ENCODE measurements at regions of chr17 and their contacts with region 1.

Region 1: DNA sequence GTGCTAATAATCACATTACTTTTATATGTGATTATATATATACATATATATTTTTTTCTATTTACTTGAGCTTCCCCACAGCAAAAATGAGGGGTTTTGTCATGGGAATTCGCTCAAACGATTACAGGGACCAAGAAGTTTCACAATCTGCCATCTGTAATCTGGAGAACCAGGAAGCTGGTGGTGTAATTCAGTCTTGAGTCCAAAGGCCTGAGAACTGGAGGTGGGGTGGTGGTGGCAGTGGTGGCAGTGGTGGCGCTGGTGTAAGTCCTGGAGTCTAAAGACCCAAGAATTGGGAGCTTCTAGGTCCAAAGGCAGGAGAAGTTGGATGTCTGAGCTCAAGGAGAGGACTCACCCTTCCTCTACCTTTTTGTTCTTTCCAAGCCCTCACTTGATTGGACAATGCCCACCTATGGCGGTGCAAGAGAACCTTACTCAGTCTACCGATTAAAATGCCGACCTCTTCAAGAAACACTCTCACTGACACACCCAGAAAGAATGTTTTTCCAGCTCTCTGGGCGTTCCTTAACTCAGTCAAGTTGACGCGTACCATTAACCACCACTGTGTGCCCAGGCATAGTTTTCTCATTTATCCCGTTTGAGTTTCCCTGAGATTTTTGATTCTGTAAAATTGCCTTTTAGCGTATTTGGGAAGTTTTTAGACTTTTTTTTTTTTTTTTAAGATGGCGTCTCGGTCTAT is 31.9 kb downstream of the POLR2A start:
- DNase-seq: no peak
- H3K4me3 ChIP-seq: no peak overlapping the region
- H3K27ac ChIP-seq: no peak overlapping the region
- H3K4me1 ChIP-seq: no peaks in the 10 kb centered on the region
- H3K27me3 ChIP-seq: no peaks in the 10 kb centered on the region
- CTCF ChIP-seq: no peak
- EP300 ChIP-seq: no peak
- POLR2A ChIP-seq: no peak
- RAD21 ChIP-seq: no peak

Region 2: DNA sequence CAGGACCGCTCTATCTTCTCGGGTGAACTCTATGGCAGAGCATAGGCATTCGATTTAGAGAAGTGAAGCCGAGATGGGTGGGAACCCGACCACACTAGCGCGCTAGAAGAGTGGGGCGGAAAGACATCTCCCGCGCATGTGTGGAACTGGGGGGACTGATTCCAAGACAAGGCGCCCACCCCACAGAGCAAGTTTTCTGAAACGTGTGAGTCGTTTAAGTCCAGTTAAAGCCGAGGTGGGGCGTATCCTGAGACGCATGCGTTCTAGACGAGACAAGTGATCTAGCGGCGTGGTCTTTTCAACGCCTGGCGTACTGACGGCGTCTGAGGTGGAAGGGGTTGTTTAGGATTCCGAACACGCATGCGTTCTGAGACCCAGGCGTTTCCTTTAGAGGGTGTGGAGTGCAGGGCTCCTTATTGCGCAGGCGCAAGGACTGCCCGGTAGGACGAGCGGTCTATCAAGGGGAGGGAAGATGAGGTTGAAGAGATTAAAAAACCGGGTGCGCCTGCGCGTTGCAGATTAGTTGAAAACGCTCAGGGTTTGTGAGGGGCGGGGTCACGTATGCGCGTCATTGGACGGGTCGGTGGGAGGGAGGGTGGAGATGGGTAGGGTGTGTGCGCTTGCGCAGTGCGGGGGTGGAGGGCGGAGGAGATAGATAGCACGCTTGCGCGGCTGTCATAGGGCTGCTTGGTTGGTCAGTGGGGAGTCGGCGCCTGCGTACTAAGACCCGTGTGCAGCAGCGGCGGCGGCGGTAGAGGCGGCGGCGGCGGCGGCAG is 209.0 kb before region 1 on chr17 and contains the start of gene EIF5A:
- CTCF ChIA-PET with region 1: no interaction called
- POLR2A ChIA-PET with region 1: no interaction called
- DNase-seq: peak; percentile 99 to 100
- H3K4me3 ChIP-seq: peak within 1 kb of the TSS; percentile 87 to 97 (median 90)
- H3K27ac ChIP-seq: peak within 1 kb of the TSS; percentile 92
- H3K4me1 ChIP-seq: peaks cover 0 to 14% (median 6%) of the 10 kb centered on the region in 4 experiments; a peak in 5 of 7 replicates
- H3K27me3 ChIP-seq: no peaks in the 10 kb centered on the region
- CTCF ChIP-seq: no peak
- EP300 ChIP-seq: 0 out of 3 replicates have a peak, but pooled peaks of 1 of the 2 experiments have one; percentile 45
- POLR2A ChIP-seq: peak; percentile 39 to 62
- RAD21 ChIP-seq: no peak
- total RNA-seq, gene EIF5A: 1,158 and 1,172 TPM in 2 replicates

Region 3: DNA sequence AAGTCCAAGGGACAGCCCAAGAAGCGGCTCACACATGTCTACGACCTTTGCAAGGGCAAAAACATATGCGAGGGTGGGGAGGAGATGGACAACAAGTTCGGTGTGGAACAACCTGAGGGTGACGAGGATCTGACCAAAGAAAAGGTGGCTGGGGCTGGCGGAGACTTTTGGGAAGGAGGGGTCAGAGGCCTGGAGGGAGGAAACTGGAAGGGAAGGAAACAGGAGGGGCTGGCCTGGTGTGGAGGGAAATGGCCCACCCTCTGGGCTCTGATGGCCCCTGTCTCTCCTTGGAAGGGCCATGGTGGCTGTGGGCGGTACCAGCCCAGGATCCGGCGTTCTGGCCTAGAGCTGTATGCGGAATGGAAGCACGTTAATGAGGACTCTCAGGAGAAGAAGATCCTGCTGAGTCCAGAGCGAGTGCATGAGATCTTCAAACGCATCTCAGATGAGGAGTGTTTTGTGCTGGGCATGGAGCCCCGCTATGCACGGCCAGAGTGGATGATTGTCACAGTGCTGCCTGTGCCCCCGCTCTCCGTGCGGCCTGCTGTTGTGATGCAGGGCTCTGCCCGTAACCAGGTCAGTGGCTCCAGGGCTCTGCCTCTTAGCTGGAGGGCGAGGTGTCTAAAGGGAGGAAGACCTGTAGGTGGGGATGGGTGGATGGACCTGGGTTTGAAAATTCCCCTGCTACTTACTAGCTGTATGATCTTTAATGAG is 19.4 kb before region 1 on chr17:
- CTCF ChIA-PET with region 1: interaction called, 82 read pairs
- POLR2A ChIA-PET with region 1: interaction called, 6 read pairs
- DNase-seq: no peak
- H3K4me3 ChIP-seq: no peak overlapping the region
- H3K27ac ChIP-seq: no peak overlapping the region
- H3K4me1 ChIP-seq: no peaks in the 10 kb centered on the region
- H3K27me3 ChIP-seq: no peaks in the 10 kb centered on the region
- CTCF ChIP-seq: no peak
- EP300 ChIP-seq: no peak
- POLR2A ChIP-seq: no peak
- RAD21 ChIP-seq: no peak

Region 4: DNA sequence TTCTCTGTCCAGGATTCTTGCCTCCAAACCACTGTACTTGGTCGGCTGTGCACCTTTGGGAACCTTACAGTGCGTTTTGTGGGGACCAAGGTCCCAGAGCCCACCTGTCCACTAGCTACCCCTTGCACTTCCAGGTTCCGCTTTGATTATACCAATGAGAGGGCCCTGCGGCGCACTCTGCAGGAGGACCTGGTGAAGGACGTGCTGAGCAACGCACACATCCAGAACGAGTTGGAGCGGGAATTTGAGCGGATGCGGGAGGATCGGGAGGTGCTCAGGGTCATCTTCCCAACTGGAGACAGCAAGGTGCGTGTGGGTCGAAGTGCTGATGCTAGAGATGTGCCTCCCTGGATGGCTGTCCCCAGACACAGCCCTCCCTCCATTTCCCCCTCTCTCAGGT is 13.1 kb before region 1 on chr17:
- CTCF ChIA-PET with region 1: interaction called, 82 read pairs
- POLR2A ChIA-PET with region 1: interaction called, 7 read pairs
- DNase-seq: peak in 1 of 2 experiments; percentile 67
- H3K4me3 ChIP-seq: no peak overlapping the region
- H3K27ac ChIP-seq: no peak overlapping the region
- H3K4me1 ChIP-seq: no peaks in the 10 kb centered on the region
- H3K27me3 ChIP-seq: no peaks in the 10 kb centered on the region
- CTCF ChIP-seq: peak; percentile 51 to 68 (median 65)
- EP300 ChIP-seq: no peak
- POLR2A ChIP-seq: peak in 1 of 2 experiments; percentile 34; a peak in 2 of 3 replicates
- RAD21 ChIP-seq: peak; percentile 71 to 76

Region 5: GRCh38 chr17:7548585-7549400 is 32.7 kb after region 1 on chr17 and contains the start of gene TNFSF12:
- CTCF ChIA-PET with region 1: interaction called, 251 read pairs
- POLR2A ChIA-PET with region 1: interaction called, 8 read pairs
- DNase-seq: peak in 1 of 2 experiments; percentile 73
- H3K4me3 ChIP-seq: peak within 1 kb of the TSS; percentile 56 to 77 (median 70)
- H3K27ac ChIP-seq: no peak within 1 kb of the TSS
- H3K4me1 ChIP-seq: peaks cover 0 to 4% (median 3%) of the 10 kb centered on the region in 4 experiments; a peak in 2 of 7 replicates
- H3K27me3 ChIP-seq: peaks cover 0 to 5% (median 3%) of the 10 kb centered on the region in 4 experiments; a peak in 4 of 7 replicates
- CTCF ChIP-seq: no peak
- EP300 ChIP-seq: no peak
- POLR2A ChIP-seq: no peak
- RAD21 ChIP-seq: 0 out of 4 replicates have a peak, but pooled peaks of 1 of the 2 experiments have one; percentile 7
- total RNA-seq, gene TNFSF12: 5.5 and 7.2 TPM in 2 replicates

Region 6: DNA sequence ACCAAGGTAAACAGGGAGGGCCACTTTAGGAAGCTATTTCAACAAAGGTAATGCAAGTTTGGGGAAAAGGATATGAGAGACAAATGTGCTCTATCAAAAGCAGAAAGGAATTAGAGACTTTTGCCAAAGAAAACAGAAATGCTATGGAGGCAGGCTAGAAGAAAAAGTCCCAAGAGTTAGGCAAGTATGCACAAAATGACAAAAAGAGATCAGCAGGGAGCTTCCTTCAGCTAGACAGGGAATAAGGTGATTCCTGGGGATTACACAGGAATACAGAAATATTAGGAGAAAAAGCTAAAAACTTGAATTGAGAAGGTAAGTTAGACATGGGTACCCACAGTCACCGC is 96.2 kb after region 1 on chr17:
- CTCF ChIA-PET with region 1: no interaction called
- POLR2A ChIA-PET with region 1: no interaction called
- DNase-seq: no peak
- H3K4me3 ChIP-seq: no peak overlapping the region
- H3K27ac ChIP-seq: no peak overlapping the region
- H3K4me1 ChIP-seq: peaks cover 0 to 5% (median 1%) of the 10 kb centered on the region in 4 experiments; a peak in 4 of 7 replicates
- H3K27me3 ChIP-seq: no peaks in the 10 kb centered on the region
- CTCF ChIP-seq: no peak
- EP300 ChIP-seq: no peak
- POLR2A ChIP-seq: no peak
- RAD21 ChIP-seq: no peak